MCF 10A (cell line): ENCODE measurements at regions of chr3 and their contacts with region 1.

Region 1: DNA sequence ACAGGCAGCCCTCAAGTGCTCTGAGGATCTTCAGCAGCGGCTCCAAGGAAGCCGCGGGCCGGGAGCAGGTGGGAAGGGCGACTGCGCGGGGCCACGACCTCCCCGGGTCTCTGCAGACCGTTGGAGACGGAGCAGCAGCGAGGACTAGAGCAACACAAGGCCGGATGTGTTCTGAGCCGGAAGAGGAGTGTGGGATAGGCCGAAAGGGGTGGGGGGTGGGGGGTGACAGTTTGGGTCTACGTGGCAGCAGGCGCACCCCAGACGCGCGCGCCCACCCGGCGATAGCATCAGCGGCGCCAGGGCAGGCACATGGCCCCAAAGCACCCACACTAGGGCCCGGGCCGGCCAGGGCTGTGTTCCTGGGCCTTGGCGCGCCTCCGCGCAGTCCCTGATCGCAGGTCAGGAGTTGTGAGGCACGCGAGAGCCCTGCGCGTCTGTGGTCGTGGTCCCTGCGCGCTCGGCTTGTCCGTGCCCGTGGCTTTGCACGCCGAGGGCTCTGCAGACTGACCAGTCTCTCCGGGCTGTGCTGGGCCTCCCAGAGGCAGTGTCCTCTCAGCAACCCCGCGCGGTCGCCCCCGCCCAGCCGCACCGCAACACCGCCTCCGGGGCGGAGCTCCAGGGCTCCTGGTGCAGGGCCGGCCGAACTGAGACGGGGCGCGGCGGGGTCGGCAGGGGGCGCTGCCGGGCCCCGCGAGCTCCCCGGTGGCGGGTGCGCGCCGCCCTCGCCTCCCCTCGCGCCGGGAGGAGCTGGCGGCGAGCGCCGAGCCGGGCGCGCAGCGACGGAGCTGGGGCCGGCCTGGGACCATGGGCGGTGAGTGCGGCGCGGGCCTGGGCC is at the start of gene PXYLP1:
- DNase-seq: peak; percentile 81
- H3K4me3 Mint-ChIP-seq: peak within 1 kb of the TSS; percentile 72
- H3K27ac Mint-ChIP-seq: peak within 1 kb of the TSS; percentile 31
- H3K4me1 Mint-ChIP-seq: peaks cover 4% of the 10 kb centered on the region
- H3K27me3 Mint-ChIP-seq: no peaks in the 10 kb centered on the region
- CTCF ChIP-seq: peak; percentile 67
- total RNA-seq, gene PXYLP1: 2.1 and 5.4 TPM in 2 replicates

Region 2: DNA sequence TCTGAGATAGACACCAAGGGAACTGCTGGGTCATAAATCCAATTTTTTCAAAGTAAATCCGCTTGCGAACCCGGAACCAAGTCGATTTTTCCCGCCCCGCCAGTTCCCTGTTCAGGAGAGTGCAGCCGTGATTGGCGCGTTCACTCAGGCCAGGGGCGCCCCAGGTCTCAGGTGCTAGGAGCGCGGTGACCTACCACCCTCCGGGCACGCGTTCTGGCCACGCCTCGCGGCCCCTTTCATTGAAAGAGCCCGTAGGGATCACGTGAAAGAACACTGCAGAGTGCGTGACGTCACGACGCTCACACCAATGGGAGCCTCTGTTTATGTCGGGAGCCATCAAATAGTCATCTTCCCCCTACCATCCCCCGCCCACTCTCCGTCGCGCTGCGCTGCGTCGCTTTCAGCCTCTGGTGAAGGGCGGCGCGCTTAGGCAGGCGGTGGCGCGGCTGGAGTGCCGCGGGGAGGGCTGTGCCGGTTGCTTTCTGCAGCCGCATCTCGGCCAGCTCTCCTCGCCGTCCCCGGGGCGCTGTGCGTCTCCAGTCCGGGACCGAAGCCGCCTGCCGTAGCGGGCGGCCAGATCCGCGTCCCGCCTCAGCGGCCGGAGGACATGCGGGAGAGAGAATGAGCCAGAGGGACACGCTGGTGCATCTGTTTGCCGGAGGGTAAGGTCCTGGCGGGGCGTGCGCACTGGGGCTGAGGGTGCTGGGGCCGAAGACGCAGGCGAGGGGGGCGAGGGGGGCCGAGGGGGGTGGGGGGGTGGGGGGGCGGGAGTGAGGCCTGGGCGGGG is 289.7 kb before region 1 on chr3 and contains the start of gene SLC25A36:
- CTCF ChIA-PET with region 1: no interaction called
- POLR2A ChIA-PET with region 1: interaction called, 10 read pairs
- intact Hi-C with region 1: no loop called
- DNase-seq: peak; percentile 99
- H3K4me3 Mint-ChIP-seq: peak within 1 kb of the TSS; percentile 95
- H3K27ac Mint-ChIP-seq: peak within 1 kb of the TSS; percentile 89
- H3K4me1 Mint-ChIP-seq: peaks cover 22% of the 10 kb centered on the region
- H3K27me3 Mint-ChIP-seq: no peaks in the 10 kb centered on the region
- CTCF ChIP-seq: no peak
- total RNA-seq, gene SLC25A36: 71.2 and 75.0 TPM in 2 replicates

Region 3: GRCh38 chr3:141164852-141165251 is 66.5 kb before region 1 on chr3:
- CTCF ChIA-PET with region 1: no interaction called
- POLR2A ChIA-PET with region 1: no interaction called
- intact Hi-C with region 1: no loop called
- DNase-seq: no peak
- H3K4me3 Mint-ChIP-seq: no peak overlapping the region
- H3K27ac Mint-ChIP-seq: no peak overlapping the region
- H3K4me1 Mint-ChIP-seq: no peaks in the 10 kb centered on the region
- H3K27me3 Mint-ChIP-seq: peaks cover 38% of the 10 kb centered on the region
- CTCF ChIP-seq: no peak

Region 4: DNA sequence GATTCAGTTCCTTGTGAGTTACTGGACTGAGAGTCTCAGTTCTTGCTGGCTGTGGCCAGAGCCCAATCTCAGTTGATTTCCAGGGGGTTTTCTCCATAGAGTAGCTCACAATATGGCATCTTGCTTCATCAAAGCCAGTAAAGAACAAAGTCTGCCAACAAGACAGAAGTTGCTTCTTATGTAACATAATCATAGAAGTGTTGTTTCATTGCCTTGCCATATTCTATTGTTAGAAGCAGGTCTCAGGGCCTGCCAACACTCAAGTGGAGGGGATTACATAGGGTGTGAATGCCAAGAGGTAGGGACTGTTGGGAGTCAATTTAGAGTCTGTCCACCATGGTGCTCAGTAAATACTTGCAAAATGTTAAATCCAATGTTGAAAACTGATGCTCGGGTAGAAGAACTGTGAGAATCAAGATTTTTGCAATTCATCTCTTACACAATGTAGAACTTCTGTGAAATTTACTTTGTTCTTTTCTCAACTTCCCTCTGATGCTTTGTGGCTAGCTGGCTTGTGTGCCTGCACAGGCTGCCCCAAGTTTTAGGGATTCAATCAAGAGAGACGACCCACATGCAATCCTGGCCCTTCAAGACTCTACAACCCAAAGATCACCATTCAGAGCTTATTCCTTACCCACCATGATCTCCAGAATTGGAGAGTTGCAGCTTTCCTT is 13.0 kb before region 1 on chr3:
- CTCF ChIA-PET with region 1: interaction called, 12 read pairs
- POLR2A ChIA-PET with region 1: no interaction called
- intact Hi-C with region 1: no loop called
- DNase-seq: no peak
- H3K4me3 Mint-ChIP-seq: no peak overlapping the region
- H3K27ac Mint-ChIP-seq: no peak overlapping the region
- H3K4me1 Mint-ChIP-seq: no peaks in the 10 kb centered on the region
- H3K27me3 Mint-ChIP-seq: peaks cover 13% of the 10 kb centered on the region
- CTCF ChIP-seq: no peak

Region 5: DNA sequence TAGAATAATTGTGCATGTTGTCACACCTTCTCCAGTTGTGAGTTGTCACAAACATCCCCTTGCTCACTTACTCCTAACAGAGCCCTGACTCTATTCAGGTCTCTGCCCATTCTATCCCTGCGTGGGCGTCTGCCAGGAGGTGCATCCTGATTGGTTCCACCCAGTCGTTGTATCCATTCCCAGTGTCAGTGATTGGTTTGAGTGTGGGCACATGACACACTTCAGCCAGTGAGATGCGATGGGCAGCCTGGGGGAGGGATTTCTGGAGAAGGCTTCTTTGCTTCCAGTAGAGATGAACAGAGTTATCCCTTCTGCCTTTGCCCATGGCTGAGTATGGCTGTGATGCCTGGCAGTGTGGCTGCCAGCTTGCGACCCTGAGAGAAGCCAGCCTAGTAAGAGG is 19.0 kb after region 1 on chr3:
- CTCF ChIA-PET with region 1: interaction called, 35 read pairs
- POLR2A ChIA-PET with region 1: interaction called, 4 read pairs
- intact Hi-C with region 1: no loop called
- DNase-seq: no peak
- H3K4me3 Mint-ChIP-seq: no peak overlapping the region
- H3K27ac Mint-ChIP-seq: no peak overlapping the region
- H3K4me1 Mint-ChIP-seq: no peaks in the 10 kb centered on the region
- H3K27me3 Mint-ChIP-seq: no peaks in the 10 kb centered on the region
- CTCF ChIP-seq: no peak

Region 6: GRCh38 chr3:141266186-141266585 is 34.9 kb after region 1 on chr3:
- CTCF ChIA-PET with region 1: interaction called, 10 read pairs
- POLR2A ChIA-PET with region 1: no interaction called
- intact Hi-C with region 1: no loop called
- DNase-seq: no peak
- H3K4me3 Mint-ChIP-seq: no peak overlapping the region
- H3K27ac Mint-ChIP-seq: no peak overlapping the region
- H3K4me1 Mint-ChIP-seq: no peaks in the 10 kb centered on the region
- H3K27me3 Mint-ChIP-seq: no peaks in the 10 kb centered on the region
- CTCF ChIP-seq: no peak

Region 7: GRCh38 chr3:141279077-141279967 is 48.0 kb after region 1 on chr3:
- CTCF ChIA-PET with region 1: interaction called, 9 read pairs
- POLR2A ChIA-PET with region 1: interaction called, 4 read pairs
- intact Hi-C with region 1: loop called (anchors 2 kb)
- DNase-seq: peak; percentile 54
- H3K4me3 Mint-ChIP-seq: no peak overlapping the region
- H3K27ac Mint-ChIP-seq: no peak overlapping the region
- H3K4me1 Mint-ChIP-seq: peaks cover 16% of the 10 kb centered on the region
- H3K27me3 Mint-ChIP-seq: no peaks in the 10 kb centered on the region
- CTCF ChIP-seq: peak; percentile 59